Mammary epithelial cell (primary cell): ENCODE measurements at regions of chr5 and their contacts with region 1.

Region 1: DNA sequence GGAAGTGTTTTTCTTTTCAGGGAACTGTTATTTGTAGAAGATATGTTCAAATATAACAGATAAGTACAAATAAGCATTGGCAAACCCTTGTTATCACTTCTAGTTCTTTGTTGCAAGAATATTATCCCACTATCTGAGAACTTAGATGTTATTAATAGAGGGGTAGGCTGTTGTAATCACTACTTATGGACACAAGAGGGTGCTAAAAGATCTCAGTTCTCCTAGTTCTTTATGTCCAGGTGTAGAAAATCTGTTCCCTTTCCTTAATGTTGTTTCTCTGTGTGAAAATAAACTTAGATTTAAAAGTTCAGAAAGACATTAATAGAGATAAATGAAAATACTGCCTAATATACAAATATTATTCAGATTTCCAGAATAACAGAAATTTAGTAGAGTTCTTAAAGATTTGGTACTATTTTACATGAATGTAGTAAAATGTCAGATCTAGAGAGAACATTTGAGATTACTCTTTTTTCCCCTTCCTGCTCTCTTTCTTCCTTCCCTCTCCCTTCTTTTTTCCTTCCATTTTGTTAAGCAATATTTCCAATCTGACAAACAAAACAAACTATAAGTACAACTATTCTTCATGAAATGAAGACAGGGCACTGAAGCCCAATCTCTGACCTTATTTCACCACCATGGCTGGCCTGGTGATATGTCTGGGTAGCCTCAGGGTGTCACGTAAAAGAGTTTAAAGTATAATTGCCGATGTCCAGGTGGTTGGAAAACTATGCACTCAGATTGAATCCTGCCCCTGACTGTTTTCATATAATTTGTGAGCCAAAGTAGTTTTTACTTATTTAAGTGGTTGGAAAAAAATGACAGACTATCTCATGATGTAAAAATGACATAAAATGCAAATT is 43.6 kb upstream of the C5orf46 start:
- DNase-seq: peak; percentile 44
- H3K4me3 ChIP-seq: no peak overlapping the region
- H3K27ac ChIP-seq: no peak overlapping the region
- H3K4me1 ChIP-seq: no peaks in the 10 kb centered on the region
- H3K27me3 ChIP-seq: no peaks in the 10 kb centered on the region
- CTCF ChIP-seq: peak; percentile 55 to 64

Region 2: DNA sequence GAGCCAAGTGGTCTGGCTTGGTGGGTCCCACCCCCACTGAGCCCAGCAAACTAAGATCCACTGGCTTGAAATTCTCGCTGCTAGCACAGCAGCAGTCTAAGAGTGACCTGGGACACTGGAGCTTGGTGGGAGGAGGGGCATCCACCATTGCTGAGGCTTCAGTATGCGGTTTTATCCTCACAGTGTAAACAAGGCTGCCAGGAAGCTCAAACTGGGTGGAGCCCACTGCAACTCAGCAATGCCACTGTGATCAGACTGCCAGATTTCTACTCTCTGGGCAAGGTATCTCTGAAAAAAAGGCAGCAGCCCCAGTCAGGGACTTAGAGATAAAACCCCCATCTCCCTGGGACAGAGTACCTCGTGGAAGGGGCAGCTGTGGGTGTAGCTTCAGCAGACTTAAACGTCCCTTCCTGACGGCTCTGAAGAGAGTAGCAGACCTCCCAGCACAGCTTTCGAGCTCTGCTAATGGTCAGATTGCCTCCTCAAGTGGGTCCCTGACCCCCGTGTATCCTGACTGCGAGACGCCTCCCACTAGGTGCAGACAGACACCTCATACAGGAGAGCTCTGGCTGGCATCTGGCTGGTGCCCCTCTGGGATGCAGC is 733.3 kb before region 1 on chr5:
- CTCF ChIA-PET with region 1: no interaction called
- dilution Hi-C with region 1: no loop called
- in situ Hi-C with region 1: no loop called
- intact Hi-C with region 1: no loop called
- DNase-seq: no peak
- H3K4me3 ChIP-seq: no peak overlapping the region
- H3K27ac ChIP-seq: no peak overlapping the region
- H3K4me1 ChIP-seq: no peaks in the 10 kb centered on the region
- H3K27me3 ChIP-seq: no peaks in the 10 kb centered on the region
- CTCF ChIP-seq: no peak

Region 3: GRCh38 chr5:148063861-148064260 is 113.9 kb after region 1 on chr5 and contains the start of gene SPINK5:
- CTCF ChIA-PET with region 1: no interaction called
- dilution Hi-C with region 1: no loop called
- in situ Hi-C with region 1: no loop called
- intact Hi-C with region 1: no loop called
- DNase-seq: peak; percentile 59
- H3K4me3 ChIP-seq: no peak within 1 kb of the TSS
- H3K27ac ChIP-seq: no peak within 1 kb of the TSS
- H3K4me1 ChIP-seq: no peaks in the 10 kb centered on the region
- H3K27me3 ChIP-seq: no peaks in the 10 kb centered on the region
- CTCF ChIP-seq: no peak
- total RNA-seq, gene SPINK5: 0.19 to 0.50 TPM

Region 4: GRCh38 chr5:148107608-148108007 is 157.7 kb after region 1 on chr5:
- CTCF ChIA-PET with region 1: no interaction called
- dilution Hi-C with region 1: no loop called
- in situ Hi-C with region 1: loop called (anchors 5 kb)
- intact Hi-C with region 1: loop called (anchors 1 kb)
- DNase-seq: no peak
- H3K4me3 ChIP-seq: no peak overlapping the region
- H3K27ac ChIP-seq: no peak overlapping the region
- H3K4me1 ChIP-seq: no peaks in the 10 kb centered on the region
- H3K27me3 ChIP-seq: no peaks in the 10 kb centered on the region
- CTCF ChIP-seq: peak; percentile 31 to 56

Region 5: DNA sequence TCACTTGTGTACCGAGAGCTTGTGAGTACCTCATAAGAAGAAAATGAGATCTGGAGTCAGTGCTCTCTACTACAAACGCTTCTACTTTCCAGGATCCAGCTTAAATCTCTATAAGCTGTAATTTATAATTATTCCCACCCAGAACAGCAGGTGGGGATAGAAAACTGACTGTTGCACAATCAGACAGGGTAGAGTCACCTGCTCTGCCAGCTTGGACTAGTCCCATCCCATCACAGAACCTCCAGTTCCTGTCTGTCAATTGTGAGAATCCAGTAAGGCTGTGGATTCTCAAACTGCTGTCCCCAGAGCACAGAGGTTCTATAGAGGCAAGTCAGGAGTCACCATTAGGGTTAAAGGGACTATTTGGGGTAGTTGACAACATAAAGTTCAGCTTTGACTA is 364.3 kb after region 1 on chr5:
- CTCF ChIA-PET with region 1: no interaction called
- dilution Hi-C with region 1: no loop called
- in situ Hi-C with region 1: no loop called
- intact Hi-C with region 1: no loop called
- DNase-seq: peak; percentile 46
- H3K4me3 ChIP-seq: no peak overlapping the region
- H3K27ac ChIP-seq: no peak overlapping the region
- H3K4me1 ChIP-seq: no peaks in the 10 kb centered on the region
- H3K27me3 ChIP-seq: no peaks in the 10 kb centered on the region
- CTCF ChIP-seq: peak in 1 of 2 donors; percentile 50

Region 6: DNA sequence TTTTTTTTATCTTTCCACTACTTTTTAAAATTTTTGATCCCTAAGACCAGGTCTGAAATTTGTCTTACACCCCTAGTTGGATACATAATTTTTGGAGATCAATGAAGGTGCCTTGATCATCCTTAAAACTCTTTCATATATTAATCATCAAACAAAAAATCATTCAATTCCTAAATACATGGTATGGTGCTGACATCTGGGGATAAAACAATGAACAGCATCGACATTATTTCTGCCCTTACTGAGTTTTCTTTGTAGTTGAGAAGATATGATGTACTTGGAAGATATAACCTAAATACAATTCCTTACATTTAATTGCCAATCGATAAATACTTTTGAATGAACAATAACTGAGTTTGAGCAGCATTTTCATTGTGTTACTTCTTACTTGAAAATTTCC is 403.7 kb after region 1 on chr5:
- CTCF ChIA-PET with region 1: no interaction called
- dilution Hi-C with region 1: no loop called
- in situ Hi-C with region 1: no loop called
- intact Hi-C with region 1: loop called (anchors 5 kb)
- DNase-seq: no peak
- H3K4me3 ChIP-seq: no peak overlapping the region
- H3K27ac ChIP-seq: no peak overlapping the region
- H3K4me1 ChIP-seq: no peaks in the 10 kb centered on the region
- H3K27me3 ChIP-seq: no peaks in the 10 kb centered on the region
- CTCF ChIP-seq: peak in 1 of 2 donors; percentile 34

Region 7: DNA sequence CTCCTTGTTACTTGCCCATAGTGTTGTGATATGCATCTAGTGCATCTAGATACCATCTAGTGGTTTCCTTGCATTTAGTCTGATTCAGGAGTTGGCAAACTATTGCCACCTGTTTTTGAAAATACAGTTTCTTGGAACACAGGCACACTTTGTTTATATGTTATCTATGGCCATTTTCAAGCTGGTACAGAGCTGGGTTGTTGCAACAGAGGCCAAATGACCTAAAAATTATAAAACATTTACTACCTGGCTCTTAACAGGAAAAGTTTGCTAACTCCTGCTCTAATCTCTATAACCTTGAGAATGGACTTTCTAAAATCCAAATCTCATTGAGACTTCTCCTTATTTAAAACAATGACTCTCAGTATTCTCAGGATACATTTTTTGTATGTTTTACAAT is 414.4 kb after region 1 on chr5:
- CTCF ChIA-PET with region 1: no interaction called
- dilution Hi-C with region 1: no loop called
- in situ Hi-C with region 1: no loop called
- intact Hi-C with region 1: no loop called
- DNase-seq: no peak
- H3K4me3 ChIP-seq: no peak overlapping the region
- H3K27ac ChIP-seq: no peak overlapping the region
- H3K4me1 ChIP-seq: no peaks in the 10 kb centered on the region
- H3K27me3 ChIP-seq: no peaks in the 10 kb centered on the region
- CTCF ChIP-seq: peak in 1 of 2 donors; percentile 16

Region 8: DNA sequence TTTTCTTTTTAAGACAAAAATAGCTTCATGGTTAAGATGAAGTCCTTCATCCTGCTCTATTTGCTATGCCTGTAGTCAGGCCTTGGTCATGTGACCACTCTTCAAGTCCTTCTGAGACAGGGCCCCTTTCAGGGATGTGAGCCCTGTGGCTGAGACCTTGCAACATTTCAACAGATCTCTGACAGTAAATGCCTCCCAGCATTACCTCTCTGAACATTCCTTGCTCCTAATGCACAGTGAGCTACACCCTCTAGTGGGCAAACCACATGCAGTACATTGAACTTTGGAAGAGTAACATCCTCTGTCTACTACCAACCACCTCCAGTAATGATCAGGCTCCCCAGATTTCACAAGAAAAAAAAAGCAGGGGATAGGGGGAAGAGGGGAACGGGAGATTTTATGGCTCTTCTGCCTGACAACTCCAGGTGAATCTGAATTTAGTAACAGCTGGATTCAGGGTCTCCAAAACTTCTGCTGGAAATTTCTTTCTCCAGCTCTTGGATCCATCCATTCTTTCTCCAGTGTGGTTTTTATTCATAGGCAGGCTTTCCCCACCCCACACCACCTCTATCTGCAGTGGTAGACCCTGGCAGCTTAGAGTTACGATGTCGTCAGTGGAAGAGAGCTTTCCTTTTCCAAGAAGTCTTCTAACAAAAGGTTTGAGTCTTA is 424.9 kb after region 1 on chr5:
- CTCF ChIA-PET with region 1: no interaction called
- dilution Hi-C with region 1: no loop called
- in situ Hi-C with region 1: no loop called
- intact Hi-C with region 1: loop called (anchors 5 kb)
- DNase-seq: peak; percentile 67
- H3K4me3 ChIP-seq: no peak overlapping the region
- H3K27ac ChIP-seq: no peak overlapping the region
- H3K4me1 ChIP-seq: peaks cover 4% of the 10 kb centered on the region
- H3K27me3 ChIP-seq: no peaks in the 10 kb centered on the region
- CTCF ChIP-seq: peak; percentile 95 to 97